ENCODE measurements at regions of chr14 and their contacts with region 1.

Region 1: DNA sequence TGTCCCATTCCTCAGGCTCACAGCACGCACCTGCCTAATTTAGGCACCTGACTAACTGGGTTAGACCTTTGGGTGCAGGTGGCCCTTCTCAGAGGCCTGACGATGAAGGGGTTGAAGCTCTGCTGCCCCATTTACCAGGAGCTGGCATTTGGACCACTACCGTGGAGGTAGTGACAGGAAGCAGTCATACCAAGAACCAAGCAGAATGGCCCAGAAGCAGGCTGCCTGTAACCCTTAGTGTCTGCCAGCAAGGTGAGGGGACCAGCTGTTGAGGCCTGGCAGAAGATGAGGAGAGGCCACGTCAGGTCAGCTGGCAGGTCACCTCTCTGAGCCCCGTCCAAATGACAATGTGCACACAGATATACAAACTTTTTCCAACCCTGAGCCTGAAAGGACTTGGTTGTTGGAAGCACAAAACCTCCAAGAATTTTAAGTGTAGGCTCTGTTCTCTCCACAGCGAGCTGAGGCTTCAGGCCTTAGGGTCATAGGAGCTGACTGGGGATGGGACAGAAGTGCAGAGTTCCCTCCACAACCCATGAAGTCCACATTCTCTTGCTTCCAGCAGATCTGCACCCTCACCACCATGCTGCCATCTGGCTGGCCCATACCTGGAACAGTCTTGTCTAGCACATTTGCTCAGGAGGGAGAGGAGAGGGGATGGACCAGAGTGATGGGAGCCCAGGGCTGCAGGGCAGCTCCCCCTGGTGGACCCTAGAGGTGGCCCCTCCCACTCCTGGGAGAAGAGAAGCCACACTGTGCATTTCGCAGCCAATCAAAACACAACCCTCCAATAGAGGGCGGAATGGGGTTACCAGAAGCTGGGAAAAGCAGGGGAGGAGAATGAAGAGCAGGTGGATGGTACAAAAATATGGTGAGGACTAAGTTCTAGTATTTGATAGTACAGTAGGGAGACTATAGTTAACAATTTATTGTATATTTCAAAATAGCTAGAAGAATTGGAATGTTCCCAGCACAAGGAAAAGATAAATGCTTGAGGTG is 23.3 kb downstream of the VASH1 start:
- DNase-seq: peak; percentile 91
- ATAC-seq: peak; percentile 99
- H3K4me3 Mint-ChIP-seq: no peak overlapping the region
- H3K27ac Mint-ChIP-seq: no peak overlapping the region
- H3K4me1 Mint-ChIP-seq: peaks cover 3% of the 10 kb centered on the region; the same call in 1 of the 2 replicates
- H3K27me3 Mint-ChIP-seq: peaks cover 2% of the 10 kb centered on the region; the same call in 1 of the 2 replicates
- CTCF ChIP-seq: peak; percentile 77

Region 2: GRCh38 chr14:76654573-76655090 is 129.9 kb before region 1 on chr14:
- CTCF ChIA-PET with region 1: interaction called, 15 read pairs
- POLR2A ChIA-PET with region 1: no interaction called
- DNase-seq: no peak
- ATAC-seq: no peak
- H3K4me3 Mint-ChIP-seq: no peak overlapping the region
- H3K27ac Mint-ChIP-seq: no peak overlapping the region
- H3K4me1 Mint-ChIP-seq: no peaks in the 10 kb centered on the region
- H3K27me3 Mint-ChIP-seq: 0 out of 2 replicates have a peak, but pooled peaks cover 4% of the 10 kb centered on the region
- CTCF ChIP-seq: no peak

Region 3: GRCh38 chr14:76720382-76720813 is 64.2 kb before region 1 on chr14:
- CTCF ChIA-PET with region 1: interaction called, 21 read pairs
- POLR2A ChIA-PET with region 1: no interaction called
- DNase-seq: peak; percentile 51
- ATAC-seq: peak; percentile 97
- H3K4me3 Mint-ChIP-seq: no peak overlapping the region
- H3K27ac Mint-ChIP-seq: no peak overlapping the region
- H3K4me1 Mint-ChIP-seq: peaks cover 21% of the 10 kb centered on the region
- H3K27me3 Mint-ChIP-seq: peaks cover 2% of the 10 kb centered on the region; the same call in 1 of the 2 replicates
- CTCF ChIP-seq: no peak

Region 4: GRCh38 chr14:76767681-76768656 is 16.6 kb before region 1 on chr14:
- CTCF ChIA-PET with region 1: interaction called, 46 read pairs
- POLR2A ChIA-PET with region 1: interaction called, 3 read pairs
- DNase-seq: peak; percentile 52
- ATAC-seq: peak; percentile 62
- H3K4me3 Mint-ChIP-seq: peak overlapping the region; percentile 44
- H3K27ac Mint-ChIP-seq: no peak overlapping the region
- H3K4me1 Mint-ChIP-seq: peaks cover 28% of the 10 kb centered on the region
- H3K27me3 Mint-ChIP-seq: peaks cover 32% of the 10 kb centered on the region
- CTCF ChIP-seq: no peak

Region 5: DNA sequence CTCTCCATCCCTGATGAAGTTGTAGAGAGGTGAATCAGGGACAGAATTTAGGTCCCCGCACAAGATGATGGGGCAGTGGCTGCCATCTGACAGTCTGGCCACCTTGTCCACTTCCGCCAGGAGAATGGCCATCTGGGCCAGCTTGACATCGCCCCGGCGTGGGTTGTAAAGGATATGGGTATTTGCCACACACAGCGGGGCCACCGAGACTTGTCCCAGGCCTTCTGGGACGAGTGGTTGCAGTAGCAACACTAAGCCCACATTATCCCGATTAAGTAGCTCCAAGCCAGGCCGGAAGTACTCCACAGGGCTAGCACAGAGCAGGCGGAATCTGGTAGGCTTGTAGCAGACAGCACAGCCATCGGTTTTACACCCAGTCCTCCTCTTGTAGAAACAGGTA is 21.9 kb after region 1 on chr14:
- CTCF ChIA-PET with region 1: interaction called, 24 read pairs
- POLR2A ChIA-PET with region 1: no interaction called
- DNase-seq: no peak
- ATAC-seq: no peak
- H3K4me3 Mint-ChIP-seq: no peak overlapping the region
- H3K27ac Mint-ChIP-seq: no peak overlapping the region
- H3K4me1 Mint-ChIP-seq: peaks cover 8% of the 10 kb centered on the region
- H3K27me3 Mint-ChIP-seq: no peaks in the 10 kb centered on the region
- CTCF ChIP-seq: no peak

Region 6: GRCh38 chr14:76829650-76830421 is 45.3 kb after region 1 on chr14:
- CTCF ChIA-PET with region 1: interaction called, 15 read pairs
- POLR2A ChIA-PET with region 1: no interaction called
- DNase-seq: no peak
- ATAC-seq: no peak; the same call in 1 of the 2 replicates
- H3K4me3 Mint-ChIP-seq: no peak overlapping the region
- H3K27ac Mint-ChIP-seq: no peak overlapping the region
- H3K4me1 Mint-ChIP-seq: peaks cover 26% of the 10 kb centered on the region
- H3K27me3 Mint-ChIP-seq: no peaks in the 10 kb centered on the region; the same call in 1 of the 2 replicates
- CTCF ChIP-seq: no peak

Region 7: DNA sequence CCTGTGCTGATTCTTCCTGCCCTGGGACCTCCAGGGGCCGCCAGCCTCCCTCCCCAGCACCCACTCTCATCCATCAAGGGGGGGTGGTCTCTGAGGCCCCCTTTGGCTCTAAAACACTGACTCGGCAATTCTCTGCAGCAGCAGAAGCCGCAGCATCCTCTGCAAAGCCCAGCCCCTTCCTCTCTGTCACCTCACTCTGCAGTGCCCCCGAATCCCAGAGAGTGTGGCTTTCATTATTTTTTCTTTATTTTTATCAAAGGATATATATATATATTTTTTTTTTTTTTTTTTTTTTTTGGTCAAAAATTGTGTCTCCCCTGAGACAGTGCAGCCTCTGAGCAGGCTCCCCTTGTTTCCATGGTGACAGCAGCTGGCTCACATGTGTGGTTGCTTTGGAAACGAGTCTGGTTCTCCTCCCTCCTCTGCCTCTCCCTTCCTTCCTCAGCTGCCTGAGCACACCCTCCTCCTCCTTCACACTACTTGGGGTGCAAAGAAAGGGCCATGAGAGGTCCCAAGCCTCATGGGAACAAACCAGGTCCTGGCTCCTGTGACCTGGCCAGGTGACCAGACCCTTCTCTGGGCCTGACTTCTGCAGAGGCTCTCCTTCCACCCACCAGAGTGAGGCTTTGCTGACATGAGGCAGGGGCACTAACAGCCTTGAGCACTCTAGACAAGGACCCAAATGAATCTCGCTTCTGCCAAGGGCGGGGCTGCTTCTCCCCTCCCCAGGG is 142.1 kb after region 1 on chr14:
- CTCF ChIA-PET with region 1: no interaction called
- POLR2A ChIA-PET with region 1: no interaction called
- DNase-seq: no peak
- ATAC-seq: no peak
- H3K4me3 Mint-ChIP-seq: no peak overlapping the region
- H3K27ac Mint-ChIP-seq: 0 out of 2 replicates have a peak overlapping the region, but pooled peaks have one; percentile 23
- H3K4me1 Mint-ChIP-seq: peaks cover 78% of the 10 kb centered on the region
- H3K27me3 Mint-ChIP-seq: no peaks in the 10 kb centered on the region
- CTCF ChIP-seq: no peak

Region 8: GRCh38 chr14:76958980-76959710 is 174.6 kb after region 1 on chr14:
- CTCF ChIA-PET with region 1: no interaction called
- POLR2A ChIA-PET with region 1: no interaction called
- DNase-seq: no peak
- ATAC-seq: no peak
- H3K4me3 Mint-ChIP-seq: no peak overlapping the region
- H3K27ac Mint-ChIP-seq: peak overlapping the region; percentile 83
- H3K4me1 Mint-ChIP-seq: peaks cover 88% of the 10 kb centered on the region
- H3K27me3 Mint-ChIP-seq: no peaks in the 10 kb centered on the region
- CTCF ChIP-seq: no peak